ENCODE measurements at regions of chr11 and their contacts with region 1.

Region 1: GRCh38 chr11:18669220-18669598 is 29.4 kb upstream of the TMEM86A start:
- DNase-seq: peak; percentile 71
- ATAC-seq: peak; percentile 79
- H3K4me3 ChIP-seq: peak overlapping the region; percentile 36; the same call in 1 of the 2 replicates
- H3K27ac ChIP-seq: peak overlapping the region; percentile 87
- H3K4me1 ChIP-seq: peaks cover 44% of the 10 kb centered on the region
- H3K27me3 ChIP-seq: no peaks in the 10 kb centered on the region
- CTCF ChIP-seq: no peak

Region 2: DNA sequence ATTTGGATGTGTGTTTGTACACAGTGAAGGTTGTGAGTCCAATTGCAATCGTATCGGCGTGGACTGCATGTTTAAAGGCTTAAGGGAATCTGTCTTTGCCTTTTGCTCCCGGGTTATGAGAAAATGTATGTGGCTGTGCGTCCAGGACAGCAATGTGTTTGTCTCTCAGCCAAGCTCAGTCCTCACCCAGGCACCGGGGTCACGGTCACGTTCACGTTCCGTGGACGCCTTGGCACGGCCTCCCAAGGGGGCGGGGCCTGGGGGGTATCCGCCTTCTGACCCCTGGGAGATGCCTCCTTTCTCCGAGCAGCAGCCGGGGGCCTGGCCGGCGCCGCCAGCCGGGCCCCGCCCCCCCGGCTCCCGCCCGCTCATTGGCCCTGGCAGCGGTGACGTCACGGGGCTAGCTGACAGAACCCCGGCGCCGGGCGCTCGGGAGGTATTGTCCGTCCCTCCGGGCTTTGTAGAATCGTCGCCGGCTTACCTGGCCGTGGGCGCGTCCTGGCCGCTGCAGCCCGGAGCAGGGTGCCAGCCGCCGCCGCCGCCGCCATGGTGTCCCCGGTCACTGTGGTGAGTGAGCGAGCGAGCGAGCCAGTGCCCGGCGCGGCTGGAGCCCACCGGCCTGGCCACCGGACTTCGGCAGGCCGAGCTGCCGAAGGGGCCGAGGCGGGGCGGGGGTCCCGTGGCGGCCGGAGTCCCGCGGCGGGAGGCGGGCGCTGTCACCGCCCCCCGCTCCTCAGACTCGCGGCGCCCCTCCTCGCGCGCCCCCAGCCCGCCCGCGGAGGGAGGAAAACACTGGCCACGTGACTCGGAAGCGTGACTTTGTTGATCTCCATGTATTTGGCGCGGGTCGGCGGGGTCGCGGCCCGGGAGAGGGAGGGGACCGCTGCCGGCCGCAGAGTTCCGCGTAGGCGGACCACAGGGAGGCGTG is 29.4 kb after region 1 on chr11 and contains the start of gene TMEM86A:
- CTCF ChIA-PET with region 1: no interaction called
- POLR2A ChIA-PET with region 1: no interaction called
- intact Hi-C with region 1: loop called (anchors 2 kb)
- DNase-seq: peak; percentile 83
- ATAC-seq: peak; percentile 91
- H3K4me3 ChIP-seq: peak within 1 kb of the TSS; percentile 82
- H3K27ac ChIP-seq: no peak within 1 kb of the TSS
- H3K4me1 ChIP-seq: peaks cover 17% of the 10 kb centered on the region
- H3K27me3 ChIP-seq: no peaks in the 10 kb centered on the region
- CTCF ChIP-seq: no peak
- total RNA-seq, gene TMEM86A: 1.6 and 2.9 TPM in 2 replicates